Esophagus muscularis mucosa (tissue), 4 donors: ENCODE measurements at regions of chr1 and their contacts with region 1.

Region 1: DNA sequence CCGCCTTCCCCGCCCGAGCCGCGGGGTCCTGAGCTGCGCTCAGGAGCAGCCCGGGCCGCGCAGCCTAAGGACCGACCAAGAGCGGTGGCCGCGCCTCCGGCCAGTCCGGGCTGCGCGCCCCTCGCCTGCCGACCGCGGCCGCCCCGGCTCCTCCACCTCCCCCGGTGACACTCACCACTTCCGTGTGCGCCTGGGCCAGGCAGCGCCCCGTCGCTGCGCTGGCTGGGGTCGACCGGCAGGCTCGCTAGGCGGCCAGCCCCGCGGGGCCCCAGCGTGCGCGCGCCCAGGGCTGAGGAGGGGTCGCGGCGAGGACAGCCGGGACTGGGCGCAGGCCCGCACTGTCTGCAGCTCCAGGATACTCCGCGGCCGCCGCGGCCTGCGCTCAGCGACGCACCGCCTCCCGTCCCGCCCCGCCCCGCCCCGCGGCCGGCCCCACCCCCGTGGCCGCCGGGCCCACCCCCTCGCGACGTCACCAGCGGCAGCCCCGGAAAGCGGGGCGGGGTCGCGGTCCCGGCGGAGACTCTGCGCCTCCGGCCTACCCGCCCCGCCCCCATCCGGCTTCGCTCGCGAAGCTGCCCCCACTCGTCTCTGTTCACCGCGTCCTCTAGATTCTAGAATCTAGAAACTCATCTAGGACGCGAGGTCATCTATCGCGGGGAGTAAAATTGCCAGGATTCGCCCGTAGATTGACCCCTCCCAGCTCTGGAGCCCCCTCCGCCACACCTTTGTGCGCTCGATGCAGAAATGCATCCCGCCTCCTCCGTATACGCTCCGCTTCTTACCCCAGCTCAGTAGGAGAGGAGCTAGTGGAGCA is at the start of gene JAK1:
- DNase-seq: no peak
- H3K4me3 ChIP-seq: peak within 1 kb of the TSS; percentile 82 to 94 (median 89)
- H3K27ac ChIP-seq: peak within 1 kb of the TSS; percentile 96 to 98 (median 98)
- H3K4me1 ChIP-seq: peaks cover 21 to 41% (median 34%) of the 10 kb centered on the region in 4 donors
- H3K27me3 ChIP-seq: no peaks in the 10 kb centered on the region
- CTCF ChIP-seq: no peak
- EP300 ChIP-seq: no peak
- POLR2A ChIP-seq: no peak
- total RNA-seq, gene JAK1: 112 to 158 (median 135) TPM

Region 2: GRCh38 chr1:64733581-64734286 is 232.6 kb before region 1 on chr1:
- intact Hi-C with region 1: no loop called
- DNase-seq: no peak
- H3K4me3 ChIP-seq: no peak overlapping the region
- H3K27ac ChIP-seq: no peak overlapping the region
- H3K4me1 ChIP-seq: no peaks in the 10 kb centered on the region
- H3K27me3 ChIP-seq: no peaks in the 10 kb centered on the region
- CTCF ChIP-seq: no peak
- EP300 ChIP-seq: no peak
- POLR2A ChIP-seq: no peak

Region 3: DNA sequence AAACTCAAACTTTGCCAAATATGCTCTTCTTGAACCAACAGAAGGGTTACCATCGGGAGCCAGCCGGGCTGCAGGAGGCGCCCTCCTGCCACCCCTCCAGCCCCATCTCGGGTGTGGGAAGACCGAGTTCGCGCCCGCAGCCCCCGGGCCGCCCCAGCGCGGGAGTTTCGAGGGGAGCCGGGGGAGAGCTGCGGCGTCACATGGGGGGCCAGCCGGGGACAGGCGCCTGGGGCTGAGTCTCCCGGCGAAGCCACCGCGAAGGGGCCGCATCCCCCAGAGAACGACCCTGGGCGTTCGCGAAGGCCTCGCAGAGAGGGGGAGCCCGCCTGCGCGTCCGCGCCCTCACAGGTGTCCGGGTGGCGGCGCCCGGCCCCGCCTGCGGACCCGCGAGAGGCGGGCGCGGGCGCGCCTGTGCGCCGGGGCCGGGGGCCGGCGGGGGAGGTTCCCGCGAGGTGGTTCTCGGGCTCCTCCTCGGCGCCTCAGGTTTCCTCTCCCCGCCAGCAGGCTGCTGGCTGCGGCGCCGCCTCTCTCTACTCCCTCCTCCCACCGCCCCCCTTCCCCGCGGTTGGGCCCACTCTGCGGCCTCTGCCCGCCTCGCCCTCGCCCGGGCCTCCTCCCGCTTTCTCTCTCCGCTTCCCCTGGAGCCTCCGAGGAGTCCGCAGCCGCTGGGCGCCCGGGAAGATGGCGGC is 221.7 kb before region 1 on chr1 and contains the start of gene RAVER2:
- intact Hi-C with region 1: loop called (anchors 10 kb)
- DNase-seq: no peak
- H3K4me3 ChIP-seq: peak within 1 kb of the TSS; percentile 79 to 93 (median 86)
- H3K27ac ChIP-seq: peak within 1 kb of the TSS; percentile 87 to 93 (median 88)
- H3K4me1 ChIP-seq: peaks cover 24 to 44% (median 42%) of the 10 kb centered on the region in 4 donors
- H3K27me3 ChIP-seq: no peaks in the 10 kb centered on the region
- CTCF ChIP-seq: peak; percentile 44 to 58 (median 45)
- EP300 ChIP-seq: no peak
- POLR2A ChIP-seq: no peak
- total RNA-seq, gene RAVER2: 17.9 to 30.2 (median 22.4) TPM

Region 4: DNA sequence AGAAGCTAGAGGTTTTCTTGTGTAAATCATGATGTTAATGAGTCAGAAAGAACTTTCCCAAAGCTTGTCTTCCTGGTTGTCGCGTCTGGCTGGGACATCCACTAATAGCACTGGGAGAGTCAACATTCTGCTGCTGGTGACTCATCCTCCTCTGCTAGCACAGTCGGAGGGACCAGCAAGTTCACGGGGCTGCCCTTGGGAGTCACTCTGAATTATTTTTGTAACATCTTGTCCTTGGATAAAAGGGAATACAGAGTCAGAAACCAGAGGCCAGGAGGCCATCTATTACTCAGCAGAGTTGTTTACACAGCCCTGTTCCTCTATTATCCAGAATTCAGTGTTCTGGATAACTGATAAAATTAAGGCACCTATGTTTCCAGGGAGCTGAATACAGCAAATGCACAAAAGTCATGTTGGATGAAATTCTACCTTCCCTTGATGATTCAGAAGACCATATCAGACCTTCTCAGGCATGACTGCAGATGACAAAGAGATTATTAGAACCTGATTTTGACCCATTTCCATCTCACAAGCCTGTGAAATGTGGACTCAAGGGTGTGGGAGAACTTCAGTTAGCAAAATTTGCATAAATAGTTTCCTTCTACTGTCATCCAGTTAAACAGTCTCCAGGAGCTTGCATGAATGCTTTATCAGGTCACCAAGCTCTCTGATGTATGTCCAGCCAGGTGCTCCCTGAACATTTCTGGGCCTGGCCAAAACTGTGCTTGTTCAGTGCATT is 68.1 kb before region 1 on chr1:
- intact Hi-C with region 1: loop called (anchors 5 kb)
- DNase-seq: peak; percentile 95
- H3K4me3 ChIP-seq: no peak overlapping the region
- H3K27ac ChIP-seq: peak overlapping the region; percentile 74 to 82 (median 79)
- H3K4me1 ChIP-seq: peaks cover 40 to 67% (median 54%) of the 10 kb centered on the region in 4 donors
- H3K27me3 ChIP-seq: no peaks in the 10 kb centered on the region
- CTCF ChIP-seq: no peak
- EP300 ChIP-seq: no peak
- POLR2A ChIP-seq: no peak

Region 5: GRCh38 chr1:65002508-65003315 is 36.3 kb after region 1 on chr1:
- intact Hi-C with region 1: loop called (anchors 2 kb)
- DNase-seq: peak; percentile 98
- H3K4me3 ChIP-seq: peak overlapping the region; percentile 65 to 82 (median 72)
- H3K27ac ChIP-seq: peak overlapping the region; percentile 92 to 98 (median 98)
- H3K4me1 ChIP-seq: peaks cover 10 to 26% (median 24%) of the 10 kb centered on the region in 4 donors
- H3K27me3 ChIP-seq: no peaks in the 10 kb centered on the region
- CTCF ChIP-seq: no peak
- EP300 ChIP-seq: no peak
- POLR2A ChIP-seq: no peak

Region 6: DNA sequence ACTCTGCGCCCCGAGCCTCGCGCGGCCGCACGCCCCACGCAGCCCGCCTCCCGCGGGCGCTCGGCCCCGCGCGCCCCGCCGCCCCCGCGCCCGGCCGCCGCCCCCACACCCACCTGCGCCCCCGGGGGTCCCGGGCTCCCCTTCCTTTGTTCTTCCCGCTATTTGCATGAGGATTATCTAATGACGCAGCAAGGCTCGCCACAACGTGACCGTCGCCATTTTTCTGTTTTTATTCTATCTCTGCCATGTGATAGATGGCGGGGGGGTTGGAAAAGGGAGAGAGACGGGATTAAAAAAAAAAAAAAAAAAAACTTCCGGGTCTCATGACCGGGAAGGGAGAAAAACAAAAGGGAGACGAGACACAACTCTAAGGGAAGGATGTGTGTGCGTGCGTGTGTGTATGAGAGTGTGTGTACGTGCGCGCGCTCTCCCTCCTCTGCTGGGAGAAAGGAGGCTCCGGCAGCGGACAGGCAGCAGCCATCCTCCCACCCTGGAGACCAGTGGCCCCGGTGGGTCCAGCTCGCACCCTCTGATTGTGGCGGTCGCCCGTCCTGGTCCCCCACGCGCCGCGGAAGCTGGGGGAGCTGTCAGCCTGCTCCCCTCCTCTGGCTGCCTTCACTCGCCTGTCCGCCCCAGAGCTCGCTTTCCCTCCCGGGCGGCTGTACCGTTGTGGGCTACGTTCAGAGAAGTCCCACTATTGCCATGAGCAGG is 101.3 kb after region 1 on chr1:
- intact Hi-C with region 1: loop called (anchors 5 kb)
- DNase-seq: peak; percentile 92
- H3K4me3 ChIP-seq: peak overlapping the region; percentile 83 to 95 (median 90)
- H3K27ac ChIP-seq: peak overlapping the region; percentile 98 to 100 (median 99)
- H3K4me1 ChIP-seq: peaks cover 21 to 45% (median 41%) of the 10 kb centered on the region in 4 donors
- H3K27me3 ChIP-seq: no peaks in the 10 kb centered on the region
- CTCF ChIP-seq: no peak
- EP300 ChIP-seq: no peak
- POLR2A ChIP-seq: peak; percentile 64